CD8-positive, alpha-beta memory T cell (primary cell): ENCODE measurements at regions of chr22 and their contacts with region 1.

Region 1: DNA sequence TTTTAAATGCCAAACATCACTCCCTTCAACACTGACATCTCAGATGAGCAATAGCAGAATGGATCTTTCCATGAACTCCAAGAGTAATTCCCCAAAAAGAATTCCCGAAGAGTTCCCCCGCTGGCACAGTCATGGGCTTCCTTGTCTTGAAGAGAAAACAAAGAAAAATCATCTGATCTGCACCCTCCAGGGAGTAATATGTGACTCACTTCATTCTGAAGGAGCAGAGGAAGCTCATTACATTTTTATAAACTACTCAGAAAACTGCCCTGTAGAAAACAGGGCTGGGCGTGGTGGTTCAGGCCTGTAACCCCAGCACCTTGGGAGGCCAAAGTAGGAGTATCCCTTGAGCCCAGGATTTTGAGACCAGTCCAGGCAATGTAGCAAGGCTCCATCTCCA is 35.7 kb downstream of the CELSR1 start:
- DNase-seq: no peak
- H3K4me3 ChIP-seq: no peak overlapping the region
- H3K4me3 Mint-ChIP-seq: no peak overlapping the region
- H3K27ac ChIP-seq: no peak overlapping the region
- H3K27ac Mint-ChIP-seq: peak overlapping the region in 1 of 8 donors; percentile 17
- H3K4me1 ChIP-seq: peaks cover 11% of the 10 kb centered on the region
- H3K4me1 Mint-ChIP-seq: peaks cover 10 to 14% (median 11%) of the 10 kb centered on the region in 3 donors
- H3K27me3 ChIP-seq: peaks cover 3% of the 10 kb centered on the region
- H3K27me3 Mint-ChIP-seq: peaks cover 29 to 44% of the 10 kb centered on the region in 2 donors

Region 2: GRCh38 chr22:46984751-46985506 is 483.2 kb after region 1 on chr22:
- CTCF ChIA-PET with region 1: no interaction called
- POLR2A ChIA-PET with region 1: interaction called, 15 read pairs
- DNase-seq: no peak
- H3K4me3 ChIP-seq: no peak overlapping the region
- H3K4me3 Mint-ChIP-seq: no peak overlapping the region
- H3K27ac ChIP-seq: no peak overlapping the region
- H3K27ac Mint-ChIP-seq: peak overlapping the region in 3 of 8 donors; percentile 26 to 50 (median 33)
- H3K4me1 ChIP-seq: no peaks in the 10 kb centered on the region
- H3K4me1 Mint-ChIP-seq: peaks cover 20 to 35% (median 34%) of the 10 kb centered on the region in 3 donors
- H3K27me3 ChIP-seq: no peaks in the 10 kb centered on the region
- H3K27me3 Mint-ChIP-seq: no peaks in the 10 kb centered on the region